WTC11 (cell line): ENCODE measurements at regions of chr17 and their contacts with region 1.

Region 1: DNA sequence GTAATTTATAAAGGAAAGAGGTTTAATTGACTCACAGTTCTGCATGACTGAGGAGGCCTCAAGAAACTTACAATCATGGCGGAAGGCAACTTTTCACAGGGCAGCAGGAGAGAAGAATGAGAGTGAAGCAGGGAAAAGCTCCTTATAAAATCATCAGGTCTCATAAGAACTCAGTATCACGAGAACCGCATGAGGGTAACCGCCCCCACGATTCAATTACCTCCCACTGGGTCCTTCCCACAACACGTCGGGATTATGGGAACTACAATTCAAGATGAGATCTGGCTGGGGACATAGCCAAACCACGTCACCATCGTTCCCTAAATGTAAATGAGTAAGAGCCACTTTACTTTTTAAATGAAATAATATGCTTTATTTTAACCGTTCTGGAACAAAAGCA is 89.9 kb upstream of the NACA2 start:
- DNase-seq: no peak
- ATAC-seq: no peak
- H3K4me3 Mint-ChIP-seq: no peak overlapping the region
- H3K27ac Mint-ChIP-seq: peak overlapping the region; percentile 72; the same call in 1 of the 2 replicates
- H3K4me1 Mint-ChIP-seq: no peaks in the 10 kb centered on the region
- H3K27me3 Mint-ChIP-seq: no peaks in the 10 kb centered on the region
- CTCF ChIP-seq: no peak

Region 2: DNA sequence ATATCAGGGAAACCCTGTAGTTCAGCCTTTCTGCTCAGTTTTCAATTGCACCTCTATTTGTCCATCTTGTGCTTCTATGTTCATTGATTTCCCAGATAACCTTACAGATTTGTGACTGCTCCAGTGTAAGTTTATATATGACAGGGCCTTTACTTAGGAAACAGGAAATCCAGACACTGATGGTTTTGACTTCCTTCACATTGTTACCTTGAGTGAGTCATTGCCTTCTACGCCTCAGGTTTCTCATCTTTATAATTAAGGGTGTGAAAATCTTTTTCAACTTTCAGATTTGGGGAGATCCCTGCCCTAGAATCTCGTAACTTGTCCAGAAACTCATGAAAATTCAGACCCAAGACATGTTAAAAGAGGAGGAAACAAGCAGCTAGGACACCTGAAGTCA is 623.7 kb before region 1 on chr17:
- CTCF ChIA-PET with region 1: no interaction called
- POLR2A ChIA-PET with region 1: interaction called, 10 read pairs
- DNase-seq: no peak
- ATAC-seq: no peak
- H3K4me3 Mint-ChIP-seq: no peak overlapping the region
- H3K27ac Mint-ChIP-seq: no peak overlapping the region
- H3K4me1 Mint-ChIP-seq: no peaks in the 10 kb centered on the region
- H3K27me3 Mint-ChIP-seq: no peaks in the 10 kb centered on the region
- CTCF ChIP-seq: no peak